SK-N-SH (cell line): ENCODE measurements at regions of chr10 and their contacts with region 1.

Region 1: DNA sequence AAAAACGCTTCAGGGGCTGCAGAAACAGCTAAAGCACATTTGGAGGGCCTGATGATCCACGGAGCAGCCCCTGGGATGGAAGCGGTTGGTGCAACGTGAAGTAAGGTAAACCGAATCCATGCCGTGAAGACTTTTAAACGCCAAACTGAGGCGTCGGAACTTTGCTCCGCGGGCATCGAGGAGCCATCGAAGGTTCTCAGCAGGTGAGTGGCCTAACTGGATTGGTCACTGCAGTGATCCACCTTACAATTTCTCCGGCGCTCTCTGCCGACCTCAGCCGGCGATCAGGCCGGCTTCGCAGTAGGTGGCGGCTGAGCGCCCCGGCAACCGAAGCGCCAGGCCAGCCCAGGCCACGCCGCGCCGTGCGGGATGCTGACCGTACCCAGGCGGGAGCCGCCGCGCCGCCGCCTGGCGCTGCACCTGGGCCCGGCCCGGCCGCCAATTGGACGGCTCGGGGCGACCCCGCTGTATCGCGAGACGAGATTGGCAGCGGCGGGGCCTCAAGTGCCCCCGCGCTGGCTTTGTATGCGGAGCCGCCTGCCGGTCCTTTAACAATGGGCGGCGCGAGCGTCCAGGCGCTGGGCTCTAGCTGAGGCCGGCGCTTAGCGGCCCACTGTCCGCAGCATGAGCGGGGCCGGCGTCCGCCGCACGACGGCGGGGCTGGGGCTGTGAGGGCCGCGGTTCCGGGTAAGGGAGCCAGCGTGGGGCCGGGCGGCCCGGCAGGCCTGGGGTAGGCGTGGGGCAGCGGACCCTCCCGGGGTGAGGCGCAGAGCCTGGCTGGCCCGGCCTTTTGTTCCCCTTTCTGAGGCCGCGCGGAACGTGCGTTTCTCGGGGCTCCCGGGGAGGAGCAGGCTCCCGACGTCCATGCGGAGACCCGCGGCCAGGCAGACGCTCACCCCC is at the start of gene CCNJ:
- DNase-seq: peak; percentile 99
- H3K4me3 ChIP-seq: peak within 1 kb of the TSS; percentile 76 to 92
- H3K27ac ChIP-seq: peak within 1 kb of the TSS; percentile 75 to 89
- H3K4me1 ChIP-seq: peaks cover 0 to 6% of the 10 kb centered on the region in 2 experiments; a peak in 2 of 4 replicates
- H3K27me3 ChIP-seq: no peaks in the 10 kb centered on the region
- CTCF ChIP-seq: no peak
- EP300 ChIP-seq: no peak
- RAD21 ChIP-seq: no peak
- polyA plus RNA-seq, gene CCNJ: 4.3 and 5.6 TPM in 2 replicates

Region 2: GRCh38 chr10:95767884-95768556 is 275.3 kb before region 1 on chr10:
- CTCF ChIA-PET with region 1: no interaction called
- POLR2A ChIA-PET with region 1: no interaction called
- DNase-seq: no peak
- H3K4me3 ChIP-seq: no peak overlapping the region
- H3K27ac ChIP-seq: no peak overlapping the region
- H3K4me1 ChIP-seq: no peaks in the 10 kb centered on the region
- H3K27me3 ChIP-seq: no peaks in the 10 kb centered on the region; the same call in 1 of the 2 replicates
- CTCF ChIP-seq: no peak
- EP300 ChIP-seq: no peak
- RAD21 ChIP-seq: no peak

Region 3: DNA sequence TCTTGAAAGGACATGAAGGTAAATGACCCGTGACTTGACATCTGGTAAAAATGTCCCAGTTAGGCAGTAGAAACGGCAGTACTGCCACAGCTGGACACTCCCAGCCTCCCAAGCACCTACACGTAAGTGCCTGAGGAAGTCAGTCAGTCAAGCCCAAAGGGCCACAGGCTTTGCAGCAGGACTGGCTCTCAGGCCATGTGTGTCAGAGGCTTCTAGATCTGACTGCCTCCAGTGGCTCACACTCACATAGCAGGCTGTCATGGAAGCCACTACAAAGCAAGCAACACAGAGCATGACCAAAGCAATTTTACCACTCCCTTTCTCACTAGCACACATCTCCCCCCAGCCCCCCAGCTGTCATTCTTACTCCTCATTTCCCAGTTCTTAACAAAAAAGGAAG is 17.7 kb before region 1 on chr10:
- CTCF ChIA-PET with region 1: no interaction called
- POLR2A ChIA-PET with region 1: no interaction called
- DNase-seq: no peak
- H3K4me3 ChIP-seq: no peak overlapping the region
- H3K27ac ChIP-seq: no peak overlapping the region
- H3K4me1 ChIP-seq: no peaks in the 10 kb centered on the region
- H3K27me3 ChIP-seq: no peaks in the 10 kb centered on the region
- CTCF ChIP-seq: peak; percentile 18; the same call in 1 of the 2 replicates
- EP300 ChIP-seq: no peak
- RAD21 ChIP-seq: no peak

Region 4: DNA sequence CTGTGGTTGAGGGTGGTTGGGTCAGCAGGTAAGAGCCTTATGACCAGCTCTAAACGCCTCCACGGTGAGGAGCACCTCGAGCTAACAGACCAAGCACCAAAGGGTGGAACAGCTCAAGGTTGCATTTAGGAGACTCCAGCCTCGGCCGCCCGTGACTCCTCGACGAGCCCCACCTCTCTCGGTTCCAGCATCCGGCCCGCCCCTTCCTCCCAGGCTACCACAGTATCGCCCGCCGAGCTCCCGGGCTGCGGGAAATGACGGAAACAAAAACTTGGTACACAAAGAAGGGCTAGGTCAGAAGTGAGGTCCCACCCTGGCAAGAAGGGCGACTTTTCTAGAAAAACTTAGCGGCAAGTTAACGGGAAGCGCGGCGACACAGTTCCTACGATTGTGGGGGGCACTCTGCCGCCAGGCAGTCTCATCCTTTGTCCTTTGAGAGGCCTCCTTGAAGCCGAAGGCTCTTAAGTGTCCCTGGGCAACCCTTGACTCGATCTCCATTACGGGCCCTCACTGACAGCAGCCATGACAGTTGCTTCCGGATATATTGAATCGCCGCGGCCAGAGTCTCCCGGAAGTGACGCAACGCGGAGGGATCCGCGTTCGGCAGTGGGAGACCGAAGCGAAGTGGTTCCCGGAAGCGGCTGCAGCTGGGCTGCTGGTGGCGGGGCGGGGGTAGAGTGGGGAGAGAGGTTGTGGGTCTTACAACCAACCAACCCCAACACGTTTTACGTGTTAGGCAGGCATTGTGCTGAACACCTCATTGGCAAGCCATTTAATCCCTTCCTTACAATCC is 46.6 kb after region 1 on chr10:
- CTCF ChIA-PET with region 1: no interaction called
- POLR2A ChIA-PET with region 1: interaction called, 13 read pairs
- DNase-seq: peak; percentile 89
- H3K4me3 ChIP-seq: peak overlapping the region; percentile 81 to 82
- H3K27ac ChIP-seq: peak overlapping the region; percentile 89 to 94
- H3K4me1 ChIP-seq: peaks cover 0 to 4% of the 10 kb centered on the region in 2 experiments; a peak in 2 of 4 replicates
- H3K27me3 ChIP-seq: no peaks in the 10 kb centered on the region; the same call in 1 of the 2 replicates
- CTCF ChIP-seq: no peak
- EP300 ChIP-seq: peak; percentile 4 to 53; a peak in 1 of 4 replicates
- RAD21 ChIP-seq: no peak